Activated CD4-positive, alpha-beta T cell treated with anti-CD3 and anti-CD28 coated beads for 36 hours (primary cell): ENCODE measurements at regions of chr16 and their contacts with region 1.

Region 1: GRCh38 chr16:78705694-78706093 is 606.2 kb downstream of the WWOX start:
- DNase-seq: peak; percentile 30
- ATAC-seq: peak; percentile 99
- H3K4me3 Mint-ChIP-seq: no peak overlapping the region
- H3K27ac Mint-ChIP-seq: no peak overlapping the region
- H3K4me1 Mint-ChIP-seq: peaks cover 13% of the 10 kb centered on the region
- H3K27me3 Mint-ChIP-seq: no peaks in the 10 kb centered on the region

Region 2: DNA sequence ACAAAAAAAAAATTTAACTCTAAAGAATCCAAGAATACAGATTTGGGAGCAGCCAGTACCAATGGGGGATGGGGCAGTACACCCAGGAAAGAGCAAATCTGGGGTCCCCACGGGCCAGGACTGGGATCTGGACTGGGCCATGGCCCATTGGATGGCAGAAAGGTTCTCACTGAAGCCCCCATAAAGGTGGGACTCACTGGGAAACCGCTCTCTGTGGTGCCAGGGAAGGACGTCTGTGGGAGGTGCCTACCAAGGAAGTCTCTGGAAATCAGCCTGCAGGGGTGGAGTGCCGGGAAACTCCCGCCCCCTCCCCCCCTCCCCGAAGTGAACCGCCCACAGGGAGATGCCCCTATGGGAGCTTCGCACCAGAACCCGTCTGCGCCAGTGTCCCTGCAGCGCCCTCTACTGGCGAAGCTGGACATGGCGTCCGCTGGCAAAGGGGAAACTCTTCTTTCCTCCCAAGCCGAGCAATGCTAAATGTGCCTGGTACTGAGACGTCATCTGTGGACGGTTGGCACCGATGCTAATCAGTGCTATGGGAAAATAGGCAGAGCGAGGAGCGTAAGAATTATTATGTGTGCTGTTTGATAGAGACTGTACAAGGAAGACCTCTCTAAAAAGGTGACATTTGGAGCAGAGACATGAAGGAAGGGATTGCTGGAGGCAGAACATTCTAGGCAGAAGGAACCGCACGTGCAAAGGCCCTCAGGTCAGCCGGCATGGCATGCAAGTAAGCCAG is 64.8 kb after region 1 on chr16:
- CTCF ChIA-PET with region 1: interaction called, 26 read pairs
- POLR2A ChIA-PET with region 1: no interaction called
- intact Hi-C with region 1: loop called (anchors 1 kb)
- DNase-seq: peak; percentile 90
- ATAC-seq: peak; percentile 23
- H3K4me3 Mint-ChIP-seq: peak overlapping the region; percentile 20
- H3K27ac Mint-ChIP-seq: peak overlapping the region; percentile 79
- H3K4me1 Mint-ChIP-seq: peaks cover 57% of the 10 kb centered on the region
- H3K27me3 Mint-ChIP-seq: peaks cover 6% of the 10 kb centered on the region

Region 3: GRCh38 chr16:78900044-78900811 is 194.5 kb after region 1 on chr16:
- CTCF ChIA-PET with region 1: interaction called, 4 read pairs
- POLR2A ChIA-PET with region 1: no interaction called
- intact Hi-C with region 1: loop called (anchors 2 to 5 kb)
- DNase-seq: no peak
- ATAC-seq: peak; percentile 55
- H3K4me3 Mint-ChIP-seq: no peak overlapping the region
- H3K27ac Mint-ChIP-seq: peak overlapping the region; percentile 80
- H3K4me1 Mint-ChIP-seq: peaks cover 52% of the 10 kb centered on the region
- H3K27me3 Mint-ChIP-seq: no peaks in the 10 kb centered on the region

Region 4: GRCh38 chr16:79071424-79071823 is 365.7 kb after region 1 on chr16:
- CTCF ChIA-PET with region 1: no interaction called
- POLR2A ChIA-PET with region 1: no interaction called
- intact Hi-C with region 1: loop called in 1 of 2 experiments (anchors 10 kb)
- DNase-seq: no peak
- ATAC-seq: no peak
- H3K4me3 Mint-ChIP-seq: no peak overlapping the region
- H3K27ac Mint-ChIP-seq: peak overlapping the region; percentile 34
- H3K4me1 Mint-ChIP-seq: peaks cover 64% of the 10 kb centered on the region
- H3K27me3 Mint-ChIP-seq: peaks cover 2% of the 10 kb centered on the region

Region 5: GRCh38 chr16:80084685-80085084 is 1379.0 kb after region 1 on chr16:
- CTCF ChIA-PET with region 1: no interaction called
- POLR2A ChIA-PET with region 1: no interaction called
- intact Hi-C with region 1: loop called in 1 of 2 experiments (anchors 10 kb)
- DNase-seq: peak; percentile 30
- ATAC-seq: peak; percentile 53
- H3K4me3 Mint-ChIP-seq: no peak overlapping the region
- H3K27ac Mint-ChIP-seq: no peak overlapping the region
- H3K4me1 Mint-ChIP-seq: no peaks in the 10 kb centered on the region
- H3K27me3 Mint-ChIP-seq: peaks cover 3% of the 10 kb centered on the region